ENCODE measurements at regions of chr2 and their contacts with region 1.

Region 1: DNA sequence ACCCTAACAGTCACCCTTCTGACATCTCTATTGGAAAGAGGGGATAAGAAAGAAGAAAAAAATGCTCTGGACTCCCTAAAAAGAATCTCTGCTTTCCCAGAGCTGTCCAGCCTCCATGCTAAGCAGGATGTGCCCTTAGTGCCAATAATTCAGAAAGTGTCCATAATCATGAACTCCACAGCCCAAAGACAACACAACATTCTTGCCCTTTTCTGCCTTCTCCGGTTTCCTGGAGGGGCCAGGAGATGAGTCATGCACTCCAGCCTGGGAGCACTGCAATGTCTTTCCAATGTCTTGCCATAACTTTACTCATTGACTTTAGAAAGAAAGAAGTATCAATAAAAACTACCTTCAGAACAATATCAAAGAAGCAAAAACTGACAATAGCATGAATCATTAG is 44.0 kb downstream of the KLF7 start:
- DNase-seq: no peak
- H3K4me3 Mint-ChIP-seq: no peak overlapping the region
- H3K27ac Mint-ChIP-seq: no peak overlapping the region
- H3K4me1 Mint-ChIP-seq: peaks cover 58% of the 10 kb centered on the region
- H3K27me3 Mint-ChIP-seq: no peaks in the 10 kb centered on the region

Region 2: DNA sequence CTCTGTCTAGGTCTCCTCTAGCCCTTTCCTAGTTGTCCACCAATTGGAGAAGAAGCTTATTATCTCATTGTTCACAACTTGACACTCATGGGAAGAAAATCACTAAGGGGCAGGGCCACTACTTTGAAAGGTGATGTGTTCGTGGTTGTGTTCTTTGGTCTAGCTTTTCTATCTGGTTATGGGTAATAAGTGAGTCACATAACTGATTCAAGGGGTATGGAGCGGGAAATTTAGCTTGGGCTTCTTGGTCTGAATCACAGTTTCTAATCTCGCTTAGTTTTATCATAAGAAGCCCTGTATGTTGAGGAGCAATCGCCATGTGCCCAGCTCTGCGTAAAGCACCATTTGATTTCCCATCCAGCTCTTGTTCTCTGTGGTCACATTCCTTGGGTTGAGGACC is 384.8 kb before region 1 on chr2:
- CTCF ChIA-PET with region 1: no interaction called
- intact Hi-C with region 1: loop called (anchors 1 kb)
- DNase-seq: peak; percentile 11
- H3K4me3 Mint-ChIP-seq: no peak overlapping the region
- H3K27ac Mint-ChIP-seq: no peak overlapping the region
- H3K4me1 Mint-ChIP-seq: peaks cover 5% of the 10 kb centered on the region
- H3K27me3 Mint-ChIP-seq: no peaks in the 10 kb centered on the region

Region 3: DNA sequence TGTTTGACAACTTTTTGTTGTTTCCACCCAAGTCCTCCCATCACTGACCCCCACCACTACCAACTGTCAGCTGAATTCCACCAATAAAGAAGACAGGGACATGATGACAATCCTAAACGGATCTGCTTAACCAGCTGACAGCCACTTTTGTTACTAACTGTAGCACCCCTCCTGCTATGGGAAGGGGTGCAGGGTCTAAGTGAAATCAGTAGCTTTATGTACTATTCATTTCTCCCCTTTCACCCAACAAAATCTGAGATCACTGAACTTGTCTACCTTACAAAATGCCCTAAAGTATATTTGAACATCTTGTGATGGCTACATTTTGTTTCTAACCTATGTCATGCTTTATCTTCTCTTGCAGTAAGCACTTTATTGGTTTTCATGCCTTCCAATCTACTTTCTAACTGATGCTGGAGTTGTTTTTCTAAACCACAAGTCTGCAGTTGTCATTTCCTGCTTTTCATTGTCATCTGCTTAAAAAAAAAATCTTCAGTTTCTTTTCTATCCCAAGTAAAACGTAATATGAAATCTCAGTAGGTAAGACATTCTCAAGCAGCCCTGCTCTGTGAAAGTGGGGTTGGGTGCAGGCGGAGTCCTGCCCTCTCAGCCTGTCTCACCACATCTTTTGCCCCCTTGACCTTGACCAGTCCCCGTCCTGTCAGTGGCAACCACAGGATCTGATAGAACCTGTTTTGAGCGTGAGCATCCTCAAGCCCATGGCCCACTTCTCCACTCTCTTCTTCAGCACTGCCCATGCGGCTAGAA is 262.6 kb before region 1 on chr2:
- CTCF ChIA-PET with region 1: no interaction called
- intact Hi-C with region 1: loop called (anchors 2 kb)
- DNase-seq: peak; percentile 31
- H3K4me3 Mint-ChIP-seq: peak overlapping the region; percentile 45
- H3K27ac Mint-ChIP-seq: peak overlapping the region; percentile 71
- H3K4me1 Mint-ChIP-seq: peaks cover 19% of the 10 kb centered on the region
- H3K27me3 Mint-ChIP-seq: no peaks in the 10 kb centered on the region

Region 4: DNA sequence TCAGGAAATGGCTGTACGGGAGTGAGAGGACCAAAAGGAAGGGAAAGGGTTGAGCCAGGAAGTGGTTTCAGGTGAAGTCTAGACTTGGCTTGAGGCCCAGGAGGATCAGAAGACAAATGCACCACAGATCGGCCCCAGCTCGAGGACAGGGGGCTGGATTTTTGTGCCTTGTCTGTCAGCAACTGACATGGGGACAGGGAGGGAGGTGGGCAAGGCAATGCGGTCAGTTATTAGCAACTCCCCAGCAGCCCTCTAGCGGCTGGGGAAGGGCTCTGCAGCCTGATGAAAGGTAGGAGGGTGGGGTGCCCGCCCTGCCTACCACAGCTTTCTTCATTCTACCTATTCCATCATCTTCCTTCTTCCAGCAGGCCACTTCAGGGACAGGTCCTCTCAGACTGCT is 132.5 kb before region 1 on chr2:
- CTCF ChIA-PET with region 1: no interaction called
- intact Hi-C with region 1: no loop called
- DNase-seq: peak; percentile 28
- H3K4me3 Mint-ChIP-seq: peak overlapping the region; percentile 13
- H3K27ac Mint-ChIP-seq: peak overlapping the region; percentile 23
- H3K4me1 Mint-ChIP-seq: peaks cover 31% of the 10 kb centered on the region
- H3K27me3 Mint-ChIP-seq: no peaks in the 10 kb centered on the region

Region 5: GRCh38 chr2:207133820-207134519 is 12.2 kb after region 1 on chr2:
- CTCF ChIA-PET with region 1: interaction called, 3 read pairs
- intact Hi-C with region 1: loop called (anchors 1 kb)
- DNase-seq: no peak
- H3K4me3 Mint-ChIP-seq: peak overlapping the region; percentile 7
- H3K27ac Mint-ChIP-seq: peak overlapping the region; percentile 30
- H3K4me1 Mint-ChIP-seq: peaks cover 91% of the 10 kb centered on the region
- H3K27me3 Mint-ChIP-seq: no peaks in the 10 kb centered on the region

Region 6: DNA sequence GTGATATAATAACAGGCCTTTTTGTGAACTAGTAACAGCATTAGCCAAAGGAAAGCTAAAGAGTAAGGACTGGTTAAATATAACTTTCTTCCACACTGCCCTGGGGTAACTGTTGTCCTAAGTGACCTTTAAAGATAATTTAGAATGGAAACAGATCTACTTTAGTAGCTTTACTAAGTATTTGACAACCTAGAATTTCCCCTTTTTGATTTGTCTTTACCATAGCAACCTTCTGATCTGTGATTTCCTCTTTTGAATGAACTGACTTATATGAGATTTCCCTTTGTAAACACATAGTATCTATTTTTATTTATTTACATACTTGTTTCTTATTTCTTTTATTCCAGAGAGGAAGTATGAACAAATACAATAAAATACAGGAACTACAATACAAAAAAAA is 54.5 kb after region 1 on chr2:
- CTCF ChIA-PET with region 1: no interaction called
- intact Hi-C with region 1: no loop called
- DNase-seq: no peak
- H3K4me3 Mint-ChIP-seq: no peak overlapping the region
- H3K27ac Mint-ChIP-seq: no peak overlapping the region
- H3K4me1 Mint-ChIP-seq: peaks cover 14% of the 10 kb centered on the region
- H3K27me3 Mint-ChIP-seq: no peaks in the 10 kb centered on the region

Region 7: DNA sequence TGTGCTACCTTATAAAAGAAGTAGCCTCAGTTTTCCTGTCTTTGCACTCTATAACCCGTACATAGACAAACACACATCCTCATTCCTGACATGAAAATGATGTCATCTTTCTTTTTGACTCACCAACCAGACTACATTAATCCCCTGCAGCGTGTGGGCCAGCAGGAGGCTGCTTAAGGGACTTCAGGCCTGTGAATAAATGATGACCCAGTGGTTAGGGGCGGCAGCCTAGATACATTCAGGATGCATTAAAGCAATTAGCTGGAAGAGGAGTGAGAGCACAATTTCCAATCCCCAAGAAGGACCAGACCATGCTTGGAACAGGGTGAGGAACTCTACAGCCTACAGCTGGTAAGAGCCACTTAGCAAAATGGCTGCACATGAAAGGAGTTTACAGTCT is 101.3 kb after region 1 on chr2:
- CTCF ChIA-PET with region 1: interaction called, 3 read pairs
- intact Hi-C with region 1: loop called (anchors 1 kb)
- DNase-seq: peak; percentile 50
- H3K4me3 Mint-ChIP-seq: no peak overlapping the region
- H3K27ac Mint-ChIP-seq: peak overlapping the region; percentile 32
- H3K4me1 Mint-ChIP-seq: peaks cover 43% of the 10 kb centered on the region
- H3K27me3 Mint-ChIP-seq: no peaks in the 10 kb centered on the region

Region 8: GRCh38 chr2:207311316-207312005 is 189.7 kb after region 1 on chr2:
- CTCF ChIA-PET with region 1: no interaction called
- intact Hi-C with region 1: loop called (anchors 1 kb)
- DNase-seq: peak; percentile 78
- H3K4me3 Mint-ChIP-seq: peak overlapping the region; percentile 13
- H3K27ac Mint-ChIP-seq: peak overlapping the region; percentile 78
- H3K4me1 Mint-ChIP-seq: peaks cover 22% of the 10 kb centered on the region
- H3K27me3 Mint-ChIP-seq: peaks cover 4% of the 10 kb centered on the region

Region 9: DNA sequence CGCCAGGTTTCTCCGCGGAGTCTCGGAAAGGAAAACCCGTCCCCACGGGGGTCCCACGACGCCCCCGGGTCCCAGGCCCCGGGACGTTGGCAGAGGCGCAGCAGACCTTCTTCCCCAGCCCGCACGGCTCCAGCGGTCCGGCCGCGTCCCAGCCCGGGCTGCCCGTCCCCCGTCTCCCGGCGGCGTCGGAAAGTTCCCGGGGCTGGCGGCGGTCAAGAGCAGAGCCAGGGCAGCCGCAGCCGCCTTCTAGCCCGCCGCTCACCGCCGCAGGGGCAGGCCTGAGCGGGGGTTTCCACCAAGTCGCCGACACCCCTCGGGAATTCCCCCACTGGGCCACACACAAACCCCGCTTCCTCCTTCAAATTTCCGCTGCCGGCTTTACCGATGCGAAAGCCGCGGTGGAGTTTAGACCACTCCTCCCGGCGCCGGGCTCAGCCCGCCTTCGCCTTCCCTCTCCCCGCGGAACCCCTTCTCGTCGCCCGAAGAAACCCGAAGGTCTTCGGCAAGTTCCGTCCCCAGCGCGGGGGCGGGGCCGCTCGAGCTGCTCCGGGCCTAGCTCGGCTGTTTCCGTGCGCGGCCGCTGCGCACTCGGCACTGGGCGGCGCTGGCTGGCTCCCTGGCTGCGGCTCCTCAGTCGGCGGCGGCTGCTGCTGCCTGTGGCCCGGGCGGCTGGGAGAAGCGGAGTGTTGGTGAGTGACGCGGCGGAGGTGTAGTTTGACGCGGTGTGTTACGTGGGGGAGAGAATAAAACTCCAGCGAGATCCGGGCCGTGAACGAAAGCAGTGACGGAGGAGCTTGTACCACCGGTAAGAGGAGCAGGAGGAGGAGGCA is 407.8 kb after region 1 on chr2 and contains the start of gene CREB1:
- CTCF ChIA-PET with region 1: no interaction called
- intact Hi-C with region 1: loop called (anchors 1 kb)
- DNase-seq: peak; percentile 100
- H3K4me3 Mint-ChIP-seq: peak within 1 kb of the TSS; percentile 98
- H3K27ac Mint-ChIP-seq: peak within 1 kb of the TSS; percentile 100
- H3K4me1 Mint-ChIP-seq: peaks cover 59% of the 10 kb centered on the region
- H3K27me3 Mint-ChIP-seq: no peaks in the 10 kb centered on the region
- total RNA-seq, gene CREB1: 93.7 to 97.7 TPM